ENCODE measurements at regions of chr1 and their contacts with region 1.

Region 1: DNA sequence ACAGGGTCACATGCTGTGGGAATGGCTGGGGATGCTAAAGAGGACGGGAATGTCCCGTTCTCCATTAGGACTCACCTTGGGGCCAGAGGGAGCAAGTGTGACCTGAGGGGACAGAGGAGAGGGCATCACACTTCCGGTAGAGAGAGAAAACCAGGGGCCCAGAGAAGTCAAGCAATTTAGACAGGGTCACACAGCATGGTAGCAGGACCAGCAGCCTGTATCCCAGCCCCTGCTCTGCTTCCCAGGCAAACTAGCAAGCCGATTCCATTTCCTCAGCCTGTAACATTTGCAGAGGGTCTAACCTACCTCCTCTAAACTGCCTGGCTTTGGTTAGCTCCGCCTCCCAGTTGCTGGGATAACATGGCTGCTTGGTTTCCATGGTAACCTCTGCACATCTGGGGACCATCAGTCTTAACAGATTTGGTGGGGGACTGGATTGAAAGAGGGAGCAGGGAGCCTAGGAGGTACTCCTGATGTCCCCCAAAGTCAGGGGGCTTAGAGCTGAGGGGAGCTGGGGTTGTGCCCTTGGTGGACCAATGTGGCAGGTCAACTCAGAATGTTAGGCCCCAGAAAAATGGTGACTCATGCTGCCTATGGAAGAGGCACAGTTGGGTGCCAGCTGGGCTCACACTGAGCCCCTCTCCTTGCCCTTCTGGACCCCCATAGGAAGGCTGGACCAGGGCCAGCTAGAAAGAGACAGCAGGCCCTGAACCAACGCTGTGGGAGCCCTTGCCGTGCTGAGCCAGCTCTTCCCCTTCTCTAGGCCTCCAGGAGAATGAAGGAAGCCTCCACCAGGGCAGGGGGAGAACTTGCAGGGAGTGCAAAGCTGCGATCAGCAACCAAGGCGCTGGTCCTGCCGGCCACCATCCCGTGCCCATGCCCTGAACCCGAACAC is 9.5 kb downstream of the COL16A1 start:
- DNase-seq: no peak
- H3K4me3 ChIP-seq: no peak overlapping the region
- H3K4me3 Mint-ChIP-seq: no peak overlapping the region
- H3K27ac Mint-ChIP-seq: no peak overlapping the region
- H3K4me1 ChIP-seq: no peaks in the 10 kb centered on the region
- H3K4me1 Mint-ChIP-seq: no peaks in the 10 kb centered on the region
- H3K27me3 ChIP-seq: no peaks in the 10 kb centered on the region
- H3K27me3 Mint-ChIP-seq: no peaks in the 10 kb centered on the region
- CTCF ChIP-seq: no peak

Region 2: GRCh38 chr1:31934706-31935629 is 240.7 kb after region 1 on chr1:
- CTCF ChIA-PET with region 1: no interaction called
- POLR2A ChIA-PET with region 1: no interaction called
- intact Hi-C with region 1: no loop called
- DNase-seq: no peak
- H3K4me3 ChIP-seq: no peak overlapping the region
- H3K4me3 Mint-ChIP-seq: peak overlapping the region; percentile 49
- H3K27ac Mint-ChIP-seq: peak overlapping the region; percentile 48
- H3K4me1 ChIP-seq: peaks cover 53% of the 10 kb centered on the region
- H3K4me1 Mint-ChIP-seq: peaks cover 37% of the 10 kb centered on the region
- H3K27me3 ChIP-seq: no peaks in the 10 kb centered on the region
- H3K27me3 Mint-ChIP-seq: no peaks in the 10 kb centered on the region
- CTCF ChIP-seq: no peak

Region 3: DNA sequence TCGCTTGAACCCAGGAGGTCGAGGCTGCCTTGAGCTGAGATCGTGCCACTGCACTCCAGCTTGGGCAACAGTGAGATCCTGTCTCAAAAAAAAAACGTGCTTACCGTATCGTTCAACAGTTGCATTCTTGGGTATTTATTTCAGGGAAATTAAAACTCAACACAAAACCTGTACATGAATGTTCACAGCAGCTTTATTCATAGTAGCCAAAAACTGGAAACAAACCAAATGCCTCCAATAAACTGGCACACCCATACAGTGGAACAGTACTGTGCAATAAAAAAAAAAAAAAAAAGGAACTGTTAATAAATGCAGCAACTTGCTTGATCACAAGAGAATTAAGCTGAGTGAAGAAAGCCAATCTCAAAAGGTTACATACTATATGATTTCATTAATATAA is 326.0 kb after region 1 on chr1:
- CTCF ChIA-PET with region 1: no interaction called
- POLR2A ChIA-PET with region 1: interaction called, 10 read pairs
- intact Hi-C with region 1: no loop called
- DNase-seq: no peak
- H3K4me3 ChIP-seq: no peak overlapping the region
- H3K4me3 Mint-ChIP-seq: no peak overlapping the region
- H3K27ac Mint-ChIP-seq: no peak overlapping the region
- H3K4me1 ChIP-seq: no peaks in the 10 kb centered on the region
- H3K4me1 Mint-ChIP-seq: peaks cover 6% of the 10 kb centered on the region
- H3K27me3 ChIP-seq: no peaks in the 10 kb centered on the region
- H3K27me3 Mint-ChIP-seq: no peaks in the 10 kb centered on the region
- CTCF ChIP-seq: no peak